ENCODE measurements at regions of chr19 and their contacts with region 1.

Region 1: GRCh38 chr19:47436712-47437401 is 17.5 kb upstream of the MEIS3 start:
- DNase-seq: peak; percentile 51 to 74
- ATAC-seq: peak; percentile 92 to 96
- H3K4me3 ChIP-seq: no peak overlapping the region
- H3K27ac ChIP-seq: no peak overlapping the region
- H3K4me1 ChIP-seq: no peaks in the 10 kb centered on the region
- H3K27me3 ChIP-seq: peaks cover 15 to 34% (median 26%) of the 10 kb centered on the region in 3 donors
- CTCF ChIP-seq: peak; percentile 85 to 96 (median 93)
- POLR2A ChIP-seq: no peak

Region 2: GRCh38 chr19:47391510-47392223 is 45.2 kb before region 1 on chr19:
- in situ Hi-C with region 1: no loop called
- intact Hi-C with region 1: no loop called
- DNase-seq: peak in 1 of 2 donors; percentile 42
- ATAC-seq: peak; percentile 60 to 62
- H3K4me3 ChIP-seq: no peak overlapping the region
- H3K27ac ChIP-seq: no peak overlapping the region
- H3K4me1 ChIP-seq: no peaks in the 10 kb centered on the region
- H3K27me3 ChIP-seq: peaks cover 0 to 7% (median 4%) of the 10 kb centered on the region in 3 donors
- CTCF ChIP-seq: peak; percentile 72 to 85 (median 80)
- POLR2A ChIP-seq: no peak

Region 3: GRCh38 chr19:47483800-47484690 is 47.2 kb after region 1 on chr19 and contains the start of gene KPTN:
- in situ Hi-C with region 1: no loop called
- intact Hi-C with region 1: loop called (anchors 2 kb)
- DNase-seq: peak; percentile 71 to 88
- ATAC-seq: peak; percentile 92 to 94
- H3K4me3 ChIP-seq: peak within 1 kb of the TSS; percentile 67 to 89 (median 79)
- H3K27ac ChIP-seq: peak within 1 kb of the TSS; percentile 89 to 95 (median 92)
- H3K4me1 ChIP-seq: peaks cover 0 to 5% of the 10 kb centered on the region in 2 donors
- H3K27me3 ChIP-seq: no peaks in the 10 kb centered on the region
- CTCF ChIP-seq: peak; percentile 67 to 95 (median 91)
- POLR2A ChIP-seq: no peak
- total RNA-seq, gene KPTN: 0.91 to 6.4 (median 3.9) TPM

Region 4: GRCh38 chr19:47523473-47523872 is 86.6 kb after region 1 on chr19:
- in situ Hi-C with region 1: loop called (anchors 5 kb)
- intact Hi-C with region 1: no loop called
- DNase-seq: no peak
- ATAC-seq: no peak
- H3K4me3 ChIP-seq: no peak overlapping the region
- H3K27ac ChIP-seq: no peak overlapping the region
- H3K4me1 ChIP-seq: peaks cover 6 to 9% of the 10 kb centered on the region in 2 donors
- H3K27me3 ChIP-seq: no peaks in the 10 kb centered on the region
- CTCF ChIP-seq: no peak
- POLR2A ChIP-seq: no peak

Region 5: GRCh38 chr19:47600246-47601179 is 163.7 kb after region 1 on chr19:
- in situ Hi-C with region 1: no loop called
- intact Hi-C with region 1: loop called (anchors 2 kb)
- DNase-seq: peak; percentile 99 to 100
- ATAC-seq: peak; percentile 96 to 97
- H3K4me3 ChIP-seq: peak overlapping the region; percentile 62 to 68 (median 63)
- H3K27ac ChIP-seq: peak overlapping the region; percentile 89 to 94 (median 92)
- H3K4me1 ChIP-seq: peaks cover 22 to 24% of the 10 kb centered on the region in 2 donors
- H3K27me3 ChIP-seq: no peaks in the 10 kb centered on the region
- CTCF ChIP-seq: peak in 2 of 5 experiments; percentile 10 to 34
- POLR2A ChIP-seq: peak; percentile 90 to 97

Region 6: DNA sequence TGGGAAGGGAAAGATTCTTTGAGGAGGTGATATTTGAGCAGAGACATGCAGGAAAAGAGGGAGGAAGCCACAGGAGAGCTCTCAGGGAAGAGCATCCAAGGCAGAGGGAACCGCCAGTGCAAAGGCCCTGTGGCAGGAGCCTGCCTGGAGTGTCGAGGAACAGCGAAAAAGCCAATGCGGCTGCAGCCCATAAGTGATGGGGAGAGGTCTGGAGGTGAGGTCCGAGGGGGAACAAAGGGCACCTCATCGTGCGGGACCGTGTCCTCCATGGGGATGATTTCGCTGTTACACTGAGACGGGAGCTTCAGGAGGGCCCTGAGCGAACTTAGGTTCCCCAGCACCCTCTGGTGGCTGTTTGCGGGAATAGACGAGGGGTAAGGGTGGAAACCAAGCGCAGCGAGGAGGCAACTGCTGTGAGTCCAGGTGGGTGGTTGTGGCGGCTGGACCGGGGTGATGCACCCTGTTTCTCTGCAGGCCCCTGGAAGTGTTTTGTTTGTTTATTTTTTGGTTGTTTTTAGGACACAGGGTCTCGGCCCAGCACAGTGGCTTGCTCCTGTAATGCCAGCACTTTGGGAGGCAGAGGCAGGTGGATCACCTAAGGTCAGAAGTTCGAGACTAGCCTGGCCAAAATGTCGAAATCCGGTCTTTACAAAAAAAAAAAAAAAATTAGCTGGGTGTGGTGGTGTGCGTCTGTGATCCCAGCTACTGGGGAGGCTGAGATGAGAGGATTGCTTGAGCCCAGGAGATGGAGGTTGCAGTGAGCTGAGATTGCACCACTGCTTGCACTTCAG is 270.5 kb after region 1 on chr19:
- in situ Hi-C with region 1: loop called (anchors 5 kb)
- intact Hi-C with region 1: loop called (anchors 1 kb)
- DNase-seq: peak; percentile 36 to 71
- ATAC-seq: peak; percentile 81 to 89
- H3K4me3 ChIP-seq: no peak overlapping the region
- H3K27ac ChIP-seq: no peak overlapping the region
- H3K4me1 ChIP-seq: no peaks in the 10 kb centered on the region
- H3K27me3 ChIP-seq: no peaks in the 10 kb centered on the region
- CTCF ChIP-seq: peak; percentile 77 to 89 (median 87)
- POLR2A ChIP-seq: no peak